IMR-90 (cell line): ENCODE measurements at regions of chr15 and their contacts with region 1.

Region 1: GRCh38 chr15:90037961-90038631 is 37.0 kb downstream of the ZNF710 start:
- DNase-seq: peak; percentile 53
- ATAC-seq: no peak
- H3K4me3 ChIP-seq: no peak overlapping the region
- H3K27ac ChIP-seq: peak overlapping the region; percentile 53
- H3K4me1 ChIP-seq: peaks cover 32% of the 10 kb centered on the region
- H3K27me3 ChIP-seq: no peaks in the 10 kb centered on the region
- CTCF ChIP-seq: no peak
- POLR2A ChIP-seq: no peak
- RAD21 ChIP-seq: no peak

Region 2: DNA sequence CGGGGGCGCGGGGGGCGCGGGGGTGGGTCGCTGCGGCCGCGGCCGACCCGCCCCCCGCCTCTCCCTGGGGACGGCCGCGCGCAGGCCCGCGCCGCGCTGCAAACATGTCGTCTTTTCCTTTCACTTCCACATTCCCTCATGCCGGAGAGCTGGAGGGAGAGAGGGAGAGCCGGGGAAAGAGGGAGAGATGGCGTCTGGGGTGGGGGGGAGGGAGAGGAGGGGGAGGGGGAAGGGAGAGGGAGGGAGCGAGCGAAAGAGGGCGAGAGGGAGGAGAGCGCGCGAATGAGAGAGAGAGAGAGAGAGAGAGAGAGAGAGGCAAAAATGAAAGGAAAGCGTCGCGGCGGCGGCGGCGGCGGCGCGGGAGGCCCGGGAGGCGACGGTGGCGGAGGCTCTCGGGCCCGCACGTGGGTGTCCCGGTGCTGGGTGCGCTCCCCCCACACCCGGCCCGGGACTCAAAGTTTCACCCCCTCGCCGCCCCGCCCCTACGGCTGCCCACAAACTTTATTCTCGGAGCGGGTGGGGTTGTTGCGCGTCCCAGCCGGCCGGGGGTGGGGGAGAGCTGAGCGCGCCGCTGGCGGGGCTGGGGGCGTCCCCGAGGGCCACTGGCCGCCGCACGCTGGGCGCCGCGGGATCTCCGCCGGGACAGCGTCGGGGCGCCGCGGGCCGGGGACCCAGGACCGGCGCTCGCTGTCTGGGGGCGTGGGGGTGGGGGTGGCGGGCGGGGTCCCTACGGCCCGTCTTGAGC is 36.2 kb before region 1 on chr15:
- CTCF ChIA-PET with region 1: no interaction called
- POLR2A ChIA-PET with region 1: no interaction called
- dilution Hi-C with region 1: no loop called
- in situ Hi-C with region 1: no loop called
- intact Hi-C with region 1: loop called (anchors 2 kb)
- DNase-seq: peak; percentile 58
- ATAC-seq: peak; percentile 33
- H3K4me3 ChIP-seq: peak overlapping the region; percentile 83
- H3K27ac ChIP-seq: peak overlapping the region; percentile 89
- H3K4me1 ChIP-seq: peaks cover 30% of the 10 kb centered on the region
- H3K27me3 ChIP-seq: no peaks in the 10 kb centered on the region
- CTCF ChIP-seq: no peak
- POLR2A ChIP-seq: 0 out of 2 replicates have a peak, but pooled peaks have one; percentile 30
- RAD21 ChIP-seq: no peak

Region 3: DNA sequence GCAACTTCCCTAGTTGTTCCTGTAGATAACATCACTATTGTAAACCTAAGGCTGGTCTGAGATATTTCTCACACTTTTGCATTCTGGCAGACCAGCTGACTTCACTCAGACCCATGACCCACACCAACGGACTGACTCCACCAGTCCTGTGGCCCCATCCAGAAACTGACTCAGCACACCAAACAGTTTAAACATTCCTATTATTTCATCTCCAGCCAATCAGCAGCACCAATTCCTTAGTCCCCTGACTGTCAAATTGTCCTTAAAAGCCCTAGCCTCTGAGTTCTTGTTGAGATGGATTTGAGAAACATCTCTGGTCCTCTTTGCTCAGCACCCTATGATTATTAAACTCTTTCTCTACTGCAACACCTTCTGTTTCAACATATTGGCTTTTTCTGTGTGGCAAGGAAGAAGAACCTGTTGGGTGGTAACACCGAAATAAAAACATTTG is 76.4 kb after region 1 on chr15:
- CTCF ChIA-PET with region 1: no interaction called
- POLR2A ChIA-PET with region 1: no interaction called
- dilution Hi-C with region 1: no loop called
- in situ Hi-C with region 1: no loop called
- intact Hi-C with region 1: no loop called
- DNase-seq: no peak
- ATAC-seq: no peak
- H3K4me3 ChIP-seq: no peak overlapping the region
- H3K27ac ChIP-seq: no peak overlapping the region
- H3K4me1 ChIP-seq: peaks cover 2% of the 10 kb centered on the region
- H3K27me3 ChIP-seq: peaks cover 5% of the 10 kb centered on the region
- CTCF ChIP-seq: no peak
- POLR2A ChIP-seq: no peak
- RAD21 ChIP-seq: no peak